SK-N-SH (cell line): ENCODE measurements at regions of chr14 and their contacts with region 1.

Region 1: DNA sequence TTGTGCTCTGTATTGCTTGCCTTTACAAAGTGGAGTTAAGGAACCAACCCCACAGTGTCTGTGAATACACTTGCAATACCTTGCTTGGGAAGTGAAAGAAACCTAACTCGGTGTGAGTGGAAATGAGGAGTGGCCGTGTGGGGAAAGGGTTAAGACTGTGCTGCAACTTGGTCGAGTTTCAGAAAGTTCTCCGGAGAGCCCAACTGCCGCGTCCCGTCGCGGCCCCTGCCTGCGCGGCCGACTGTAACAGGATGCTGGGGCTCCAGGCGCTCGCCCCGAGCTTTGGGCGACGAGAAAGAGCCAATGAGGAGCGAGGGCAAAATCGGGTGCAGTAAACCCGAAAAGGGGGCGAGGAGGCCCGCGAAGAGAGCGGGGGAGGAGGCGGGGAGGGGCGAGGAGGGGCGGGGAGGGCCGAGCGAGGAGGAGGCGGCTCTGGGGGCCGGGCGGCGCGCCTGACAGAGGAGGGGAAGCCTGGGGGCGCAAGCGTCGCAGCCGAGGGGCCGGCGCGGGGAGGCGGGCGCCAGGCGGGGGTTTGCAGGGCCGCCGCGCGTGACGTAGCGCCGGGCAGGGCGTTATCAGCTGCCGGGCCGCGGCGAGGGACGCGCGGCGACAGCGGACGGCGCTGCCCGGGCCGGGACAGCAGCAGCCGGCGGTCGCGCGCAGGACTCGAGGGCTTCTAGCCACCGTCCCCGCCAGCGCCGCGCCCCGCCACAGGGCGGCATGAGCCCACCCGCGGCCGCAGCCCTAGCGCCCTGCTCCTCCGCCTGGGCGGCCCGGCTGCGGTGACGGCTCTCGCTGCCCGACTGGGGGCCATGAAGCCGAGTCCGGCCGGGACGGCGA is at the start of gene DACT1:
- DNase-seq: peak; percentile 82
- H3K4me3 ChIP-seq: peak within 1 kb of the TSS; percentile 74 to 77
- H3K27ac ChIP-seq: peak within 1 kb of the TSS; percentile 43 to 73
- H3K4me1 ChIP-seq: peaks cover 14 to 16% of the 10 kb centered on the region in 2 experiments; a peak in 3 of 4 replicates
- H3K27me3 ChIP-seq: no peaks in the 10 kb centered on the region
- CTCF ChIP-seq: no peak; the same call in 1 of the 2 replicates
- EP300 ChIP-seq: no peak
- RAD21 ChIP-seq: no peak
- polyA plus RNA-seq, gene DACT1: 3.3 and 4.2 TPM in 2 replicates

Region 2: DNA sequence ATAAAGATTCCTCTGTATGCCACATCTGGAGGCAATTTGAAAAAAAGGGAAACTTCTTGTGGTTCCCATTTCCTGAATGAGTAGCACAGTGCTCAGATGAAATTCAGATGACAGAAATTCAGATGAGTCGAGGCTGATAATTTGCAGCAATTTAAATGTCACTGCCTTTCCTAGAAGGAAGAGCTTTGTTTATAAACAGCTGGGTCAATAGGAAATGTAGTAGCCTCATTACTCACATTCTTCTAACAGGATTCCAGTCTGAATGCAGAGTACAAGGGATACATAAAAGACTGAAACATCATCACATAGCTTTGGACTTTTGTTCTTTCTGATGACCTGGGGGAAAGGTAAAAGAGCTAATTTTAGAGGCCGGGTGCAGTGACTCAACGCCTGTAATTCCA is 11.2 kb before region 1 on chr14:
- CTCF ChIA-PET with region 1: interaction called, 15 read pairs
- POLR2A ChIA-PET with region 1: no interaction called
- DNase-seq: no peak
- H3K4me3 ChIP-seq: no peak overlapping the region
- H3K27ac ChIP-seq: no peak overlapping the region
- H3K4me1 ChIP-seq: peaks cover 0 to 10% of the 10 kb centered on the region in 2 experiments; a peak in 1 of 4 replicates
- H3K27me3 ChIP-seq: no peaks in the 10 kb centered on the region
- CTCF ChIP-seq: no peak
- EP300 ChIP-seq: peak in 1 of 2 experiments; percentile 18; a peak in 1 of 4 replicates
- RAD21 ChIP-seq: no peak

Region 3: DNA sequence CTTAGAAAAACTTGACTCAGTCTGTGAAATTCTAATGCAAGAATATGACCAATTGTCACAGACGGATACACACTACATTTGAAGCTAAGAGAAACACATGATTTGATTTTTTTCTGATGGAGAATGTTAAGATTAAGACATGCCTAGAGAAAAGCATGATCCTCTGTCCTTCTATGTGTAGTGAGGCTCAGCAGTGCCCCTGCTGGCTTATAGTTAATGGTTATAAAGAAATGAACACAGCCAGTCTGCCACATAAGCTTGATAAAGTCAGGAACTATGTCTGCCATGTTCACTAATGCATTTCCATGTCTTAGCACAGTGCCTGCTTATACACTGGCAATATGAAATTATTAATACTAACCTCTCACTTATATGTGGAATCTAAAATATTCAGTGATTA is 382.8 kb after region 1 on chr14:
- CTCF ChIA-PET with region 1: interaction called, 30 read pairs
- POLR2A ChIA-PET with region 1: no interaction called
- DNase-seq: peak; percentile 8
- H3K4me3 ChIP-seq: no peak overlapping the region; a peak in 1 of 4 replicates
- H3K27ac ChIP-seq: no peak overlapping the region
- H3K4me1 ChIP-seq: no peaks in the 10 kb centered on the region; a peak in 2 of 4 replicates
- H3K27me3 ChIP-seq: no peaks in the 10 kb centered on the region
- CTCF ChIP-seq: peak; percentile 62
- EP300 ChIP-seq: no peak
- RAD21 ChIP-seq: peak; percentile 60

Region 4: GRCh38 chr14:59055439-59056045 is 417.9 kb after region 1 on chr14:
- CTCF ChIA-PET with region 1: interaction called, 11 read pairs
- POLR2A ChIA-PET with region 1: no interaction called
- DNase-seq: peak; percentile 65
- H3K4me3 ChIP-seq: no peak overlapping the region
- H3K27ac ChIP-seq: no peak overlapping the region
- H3K4me1 ChIP-seq: no peaks in the 10 kb centered on the region
- H3K27me3 ChIP-seq: no peaks in the 10 kb centered on the region
- CTCF ChIP-seq: peak; percentile 88
- EP300 ChIP-seq: no peak
- RAD21 ChIP-seq: peak; percentile 84